ENCODE measurements at regions of chr6 and their contacts with region 1.

Region 1: DNA sequence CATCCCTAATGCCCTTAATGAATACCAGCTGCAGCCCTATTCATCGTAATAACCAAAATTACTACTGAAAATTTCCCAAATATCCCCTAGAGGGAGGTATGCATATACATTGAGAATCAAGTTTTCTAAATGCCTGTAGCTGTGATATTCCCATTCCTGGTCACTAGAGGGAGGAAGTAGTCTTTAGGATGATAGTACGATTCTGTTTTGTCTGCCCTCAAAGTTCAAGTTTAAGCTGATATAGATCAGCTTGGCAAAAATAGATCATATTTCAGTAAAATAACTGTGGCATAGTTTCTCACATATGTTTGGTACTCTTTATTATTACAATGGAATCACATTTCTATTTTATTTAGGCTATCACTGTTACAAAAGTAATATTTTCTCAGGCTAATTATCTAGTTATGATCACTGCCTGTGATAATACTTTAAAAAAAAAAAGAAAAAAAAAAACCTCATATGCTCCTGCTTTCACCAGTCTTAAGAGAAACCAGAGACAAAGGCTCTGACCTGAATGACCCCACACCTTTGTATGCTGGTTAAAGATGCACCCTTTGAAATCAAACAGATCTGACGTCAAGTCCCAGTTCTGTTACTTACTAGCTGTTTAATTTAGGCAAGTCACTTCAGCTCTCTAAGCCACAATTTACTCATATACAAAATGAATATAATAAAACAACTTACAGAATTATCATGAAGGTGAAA is 11.0 kb downstream of the TSPYL1 start:
- DNase-seq: peak; percentile 82
- H3K4me3 Mint-ChIP-seq: no peak overlapping the region
- H3K27ac Mint-ChIP-seq: peak overlapping the region; percentile 49
- H3K4me1 Mint-ChIP-seq: peaks cover 17% of the 10 kb centered on the region
- H3K27me3 Mint-ChIP-seq: no peaks in the 10 kb centered on the region
- CTCF ChIP-seq: peak; percentile 80

Region 2: DNA sequence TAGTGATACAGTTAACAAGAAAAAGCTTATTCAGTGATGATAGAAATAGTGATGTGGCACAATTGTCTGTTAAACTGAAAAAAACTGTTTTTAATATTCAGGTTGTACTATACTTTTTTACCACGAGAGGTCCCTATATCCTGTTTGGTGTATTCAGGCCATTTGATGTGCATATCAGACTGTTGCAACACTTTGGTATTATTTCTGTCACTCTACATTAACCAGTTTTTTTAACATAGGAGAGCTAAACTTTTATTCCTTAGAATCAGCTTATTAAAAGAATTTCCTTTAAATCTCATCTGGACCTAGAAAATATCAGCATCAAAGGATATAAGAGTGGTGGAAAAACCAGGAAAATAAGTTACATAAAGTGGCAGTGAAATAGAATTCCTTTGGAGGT is 51.7 kb before region 1 on chr6:
- CTCF ChIA-PET with region 1: interaction called, 24 read pairs
- POLR2A ChIA-PET with region 1: interaction called, 6 read pairs
- intact Hi-C with region 1: loop called (anchors 5 kb)
- DNase-seq: peak; percentile 62
- H3K4me3 Mint-ChIP-seq: no peak overlapping the region
- H3K27ac Mint-ChIP-seq: no peak overlapping the region
- H3K4me1 Mint-ChIP-seq: no peaks in the 10 kb centered on the region
- H3K27me3 Mint-ChIP-seq: no peaks in the 10 kb centered on the region
- CTCF ChIP-seq: peak; percentile 63

Region 3: DNA sequence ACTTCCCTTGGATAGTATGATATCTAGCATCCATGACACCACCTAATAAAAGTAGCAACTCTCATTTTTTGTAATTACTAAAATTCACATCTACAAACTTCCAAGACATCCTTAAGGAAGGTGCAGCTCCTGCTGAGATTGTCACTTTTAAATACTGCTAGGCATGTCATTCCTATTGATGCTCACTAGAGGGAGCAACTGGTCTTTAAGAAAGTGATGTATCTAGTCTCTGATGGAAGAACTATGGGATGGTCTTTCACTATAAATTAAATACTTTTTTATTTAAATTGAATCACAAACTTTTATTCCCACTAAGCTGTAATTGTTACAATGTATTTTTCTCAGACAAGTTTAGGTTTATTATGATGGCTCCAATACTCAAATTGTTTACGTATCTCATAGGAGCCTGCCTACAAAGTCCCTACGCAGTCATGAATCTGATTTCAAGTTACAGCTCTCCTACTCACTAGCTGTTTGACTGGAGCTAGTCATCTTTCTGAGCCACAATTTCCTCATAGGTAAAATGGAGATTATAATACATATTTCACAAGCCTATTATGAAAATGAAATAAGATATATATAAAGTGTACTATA is 19.0 kb after region 1 on chr6:
- CTCF ChIA-PET with region 1: interaction called, 20 read pairs
- POLR2A ChIA-PET with region 1: interaction called, 4 read pairs
- intact Hi-C with region 1: no loop called
- DNase-seq: peak; percentile 69
- H3K4me3 Mint-ChIP-seq: no peak overlapping the region
- H3K27ac Mint-ChIP-seq: no peak overlapping the region
- H3K4me1 Mint-ChIP-seq: no peaks in the 10 kb centered on the region
- H3K27me3 Mint-ChIP-seq: no peaks in the 10 kb centered on the region
- CTCF ChIP-seq: peak; percentile 83

Region 4: DNA sequence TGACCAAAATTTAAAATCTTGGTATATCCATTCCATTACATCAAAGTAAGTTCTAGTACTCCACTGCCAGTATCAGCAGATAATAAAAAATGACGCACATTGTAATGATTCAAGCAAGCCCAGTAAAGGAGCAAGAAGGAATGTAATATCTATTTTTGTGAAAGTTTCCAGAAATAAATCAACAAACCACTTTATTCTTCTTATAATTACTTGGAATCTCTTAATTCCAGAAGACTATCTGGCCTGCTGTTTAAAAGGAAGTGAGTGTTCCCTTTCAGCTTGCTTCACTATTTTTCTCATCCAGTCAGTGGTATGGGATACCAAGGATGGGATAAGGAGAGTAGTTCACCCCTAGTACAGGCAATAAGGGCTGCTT is 59.8 kb after region 1 on chr6:
- CTCF ChIA-PET with region 1: no interaction called
- POLR2A ChIA-PET with region 1: no interaction called
- intact Hi-C with region 1: no loop called
- DNase-seq: no peak
- H3K4me3 Mint-ChIP-seq: no peak overlapping the region
- H3K27ac Mint-ChIP-seq: no peak overlapping the region
- H3K4me1 Mint-ChIP-seq: peaks cover 6% of the 10 kb centered on the region
- H3K27me3 Mint-ChIP-seq: no peaks in the 10 kb centered on the region
- CTCF ChIP-seq: no peak

Region 5: DNA sequence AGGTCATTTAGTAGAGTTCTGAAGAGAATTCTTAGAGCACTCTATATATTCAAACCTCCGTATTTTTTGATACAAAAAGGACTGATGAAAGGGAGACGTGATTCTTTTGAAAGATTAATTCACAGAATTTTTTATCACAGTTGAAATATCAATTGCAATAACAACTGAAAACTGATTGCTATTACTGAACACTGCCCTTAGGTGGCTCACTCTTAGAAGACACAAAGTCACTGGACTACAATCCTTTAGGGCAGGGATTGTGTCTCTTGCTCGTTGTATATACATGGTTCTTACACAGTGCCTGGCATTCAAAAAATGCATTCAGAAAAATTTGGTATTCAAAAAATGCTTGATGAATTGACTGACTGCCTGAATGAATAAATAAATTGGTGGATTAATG is 175.4 kb after region 1 on chr6:
- CTCF ChIA-PET with region 1: interaction called, 13 read pairs
- POLR2A ChIA-PET with region 1: interaction called, 3 read pairs
- intact Hi-C with region 1: no loop called
- DNase-seq: peak; percentile 53
- H3K4me3 Mint-ChIP-seq: no peak overlapping the region
- H3K27ac Mint-ChIP-seq: peak overlapping the region; percentile 37
- H3K4me1 Mint-ChIP-seq: peaks cover 24% of the 10 kb centered on the region
- H3K27me3 Mint-ChIP-seq: no peaks in the 10 kb centered on the region
- CTCF ChIP-seq: peak; percentile 54

Region 6: DNA sequence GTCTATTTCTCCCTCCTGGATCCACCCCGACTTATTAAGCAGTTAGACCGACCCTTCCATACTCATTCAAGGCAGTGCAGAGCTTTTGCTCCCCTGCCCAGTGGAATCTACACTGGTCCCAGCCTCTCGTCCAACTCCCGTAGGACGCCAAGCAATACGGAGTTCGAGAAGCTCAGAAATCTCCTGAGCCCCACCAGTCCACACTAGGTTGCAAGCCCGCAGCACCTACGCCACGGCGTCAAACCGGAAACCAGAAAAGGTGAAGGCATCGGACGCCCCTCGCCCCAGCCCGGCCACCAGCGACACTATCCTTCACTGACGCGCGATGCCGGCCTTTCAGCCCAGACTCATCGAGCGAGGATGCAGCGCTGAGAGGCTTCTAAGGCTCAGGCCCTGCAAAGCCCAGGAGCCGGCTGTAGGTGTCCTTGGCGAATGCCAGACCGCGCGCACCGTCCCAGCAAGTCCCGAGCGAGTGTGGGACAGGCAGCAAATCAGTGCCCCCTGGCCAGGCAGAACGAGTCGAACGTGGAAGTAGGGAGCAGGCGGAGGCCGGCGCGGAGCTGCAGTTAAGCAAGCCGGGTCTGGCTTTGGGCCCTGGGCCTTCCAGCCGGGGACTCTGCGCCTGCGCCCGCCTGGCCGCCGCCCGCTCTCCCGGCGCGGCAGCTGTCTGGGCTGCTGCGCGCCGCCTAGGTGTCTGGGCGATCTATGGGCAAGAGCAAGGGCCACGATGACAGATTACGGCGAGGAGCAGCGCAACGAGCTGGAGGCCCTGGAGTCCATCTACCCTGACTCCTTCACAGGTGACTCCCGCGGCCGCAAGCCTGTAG is 302.3 kb after region 1 on chr6 and contains the start of gene RWDD1:
- CTCF ChIA-PET with region 1: interaction called, 155 read pairs
- POLR2A ChIA-PET with region 1: interaction called, 19 read pairs
- intact Hi-C with region 1: no loop called
- DNase-seq: peak; percentile 98
- H3K4me3 Mint-ChIP-seq: peak within 1 kb of the TSS; percentile 98
- H3K27ac Mint-ChIP-seq: peak within 1 kb of the TSS; percentile 98
- H3K4me1 Mint-ChIP-seq: peaks cover 25% of the 10 kb centered on the region
- H3K27me3 Mint-ChIP-seq: no peaks in the 10 kb centered on the region
- CTCF ChIP-seq: no peak
- total RNA-seq, gene RWDD1: 41.6 and 57.2 TPM in 2 replicates